Astrocyte of the cerebellum (primary cell): ENCODE measurements at regions of chr10 and their contacts with region 1.

Region 1: DNA sequence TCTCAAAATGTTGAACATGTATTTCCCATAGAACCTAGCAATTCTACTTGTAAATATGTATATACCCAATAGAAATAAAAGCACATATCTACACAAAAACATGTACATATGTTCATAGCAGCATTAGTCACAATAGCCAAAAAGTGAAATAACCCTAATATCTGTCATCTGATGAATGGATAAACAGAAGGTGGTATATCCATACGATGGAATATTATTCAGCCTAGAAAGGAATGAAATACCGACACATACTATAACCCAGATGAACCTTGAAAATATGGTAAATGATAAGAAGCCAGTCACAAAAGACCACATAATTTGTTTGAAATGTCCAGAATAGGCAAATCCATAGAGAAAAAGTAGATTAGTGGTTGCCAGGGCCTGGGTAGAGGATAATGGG is 87.9 kb downstream of the MCU start:
- DNase-seq: no peak
- H3K4me3 ChIP-seq: no peak overlapping the region
- CTCF ChIP-seq: no peak

Region 2: GRCh38 chr10:72692057-72692910 is 87.6 kb before region 1 on chr10 and contains the start of gene MCU:
- in situ Hi-C with region 1: loop called (anchors 5 kb)
- DNase-seq: peak; percentile 88
- H3K4me3 ChIP-seq: peak within 1 kb of the TSS; percentile 93
- CTCF ChIP-seq: no peak

Region 3: GRCh38 chr10:72702868-72703581 is 76.8 kb before region 1 on chr10:
- in situ Hi-C with region 1: no loop called
- DNase-seq: no peak
- H3K4me3 ChIP-seq: no peak overlapping the region
- CTCF ChIP-seq: peak; percentile 14